Colonic mucosa (tissue), 4 donors: ENCODE measurements at regions of chr9 and their contacts with region 1.

Region 1: GRCh38 chr9:121222524-121223171 is 21.0 kb upstream of the RAB14 start:
- DNase-seq: no peak
- H3K4me3 ChIP-seq: no peak overlapping the region
- H3K27ac ChIP-seq: no peak overlapping the region
- H3K4me1 ChIP-seq: no peaks in the 10 kb centered on the region
- H3K27me3 ChIP-seq: no peaks in the 10 kb centered on the region
- CTCF ChIP-seq: peak; percentile 81

Region 2: GRCh38 chr9:121261107-121261460 is 38.4 kb after region 1 on chr9:
- intact Hi-C with region 1: loop called (anchors 5 kb)
- DNase-seq: no peak
- H3K4me3 ChIP-seq: no peak overlapping the region
- H3K27ac ChIP-seq: no peak overlapping the region
- H3K4me1 ChIP-seq: no peaks in the 10 kb centered on the region
- H3K27me3 ChIP-seq: no peaks in the 10 kb centered on the region
- CTCF ChIP-seq: no peak